Psoas muscle (tissue), 8 donors: ENCODE measurements at regions of chr6 and their contacts with region 1.

Region 1: GRCh38 chr6:156776840-156777576 is at the start of gene ARID1B:
- DNase-seq: peak; percentile 89 to 92
- ATAC-seq: peak; percentile 75 to 81 (median 78)
- H3K4me3 ChIP-seq: peak within 1 kb of the TSS; percentile 84
- H3K27ac ChIP-seq: peak within 1 kb of the TSS; percentile 99
- H3K4me1 ChIP-seq: peaks cover 35% of the 10 kb centered on the region
- H3K27me3 ChIP-seq: no peaks in the 10 kb centered on the region
- CTCF ChIP-seq: no peak
- total RNA-seq, gene ARID1B: 53.1 to 61.1 (median 55.8) TPM

Region 2: DNA sequence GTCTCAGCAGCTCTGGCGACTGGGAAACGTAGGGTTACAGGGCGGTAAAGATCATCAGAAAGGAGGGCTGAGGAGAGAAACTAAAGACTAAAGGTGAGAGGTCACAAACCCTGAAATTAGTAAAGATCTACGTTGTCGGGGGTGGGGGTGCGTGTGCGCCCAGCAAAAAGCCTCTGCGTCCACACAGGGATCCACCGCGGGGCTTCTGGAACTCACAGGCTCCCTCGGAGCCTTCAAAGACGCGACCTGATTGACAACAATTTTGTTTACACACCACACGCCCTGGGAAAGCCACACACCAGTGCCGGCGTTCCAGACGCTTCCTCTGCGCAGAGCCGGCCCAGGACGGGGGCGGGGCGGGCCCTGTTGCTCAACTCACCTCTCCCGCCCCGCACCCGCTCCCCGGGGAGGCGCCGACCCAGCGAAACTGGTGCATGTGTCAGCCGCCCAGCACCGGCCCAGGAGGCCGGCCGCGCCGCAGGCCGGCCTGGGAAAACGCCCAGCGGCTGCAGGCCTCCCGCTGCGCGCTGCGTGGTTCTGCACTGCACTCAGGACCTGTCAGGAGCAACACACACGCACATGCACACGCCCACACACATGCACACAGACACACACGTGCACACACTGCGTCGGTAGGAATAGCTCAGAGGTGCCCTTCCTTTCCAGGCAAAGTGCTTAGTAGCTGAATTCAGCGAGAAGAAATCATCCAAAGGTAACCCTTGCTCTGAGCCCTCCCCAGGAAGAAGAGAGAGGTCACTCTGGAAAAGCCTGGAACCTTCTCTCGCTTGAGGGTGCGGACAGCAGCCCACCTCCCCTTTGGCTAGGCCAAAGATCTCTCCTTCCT is 57.1 kb before region 1 on chr6:
- intact Hi-C with region 1: loop called (anchors 2 to 5 kb)
- DNase-seq: peak; percentile 97 to 98
- ATAC-seq: peak; percentile 93 to 98 (median 94)
- H3K4me3 ChIP-seq: peak overlapping the region; percentile 44
- H3K27ac ChIP-seq: peak overlapping the region; percentile 82
- H3K4me1 ChIP-seq: peaks cover 26% of the 10 kb centered on the region
- H3K27me3 ChIP-seq: no peaks in the 10 kb centered on the region
- CTCF ChIP-seq: no peak

Region 3: GRCh38 chr6:156741287-156742073 is 35.5 kb before region 1 on chr6:
- intact Hi-C with region 1: no loop called
- DNase-seq: no peak
- ATAC-seq: no peak
- H3K4me3 ChIP-seq: no peak overlapping the region
- H3K27ac ChIP-seq: no peak overlapping the region
- H3K4me1 ChIP-seq: no peaks in the 10 kb centered on the region
- H3K27me3 ChIP-seq: no peaks in the 10 kb centered on the region
- CTCF ChIP-seq: no peak

Region 4: DNA sequence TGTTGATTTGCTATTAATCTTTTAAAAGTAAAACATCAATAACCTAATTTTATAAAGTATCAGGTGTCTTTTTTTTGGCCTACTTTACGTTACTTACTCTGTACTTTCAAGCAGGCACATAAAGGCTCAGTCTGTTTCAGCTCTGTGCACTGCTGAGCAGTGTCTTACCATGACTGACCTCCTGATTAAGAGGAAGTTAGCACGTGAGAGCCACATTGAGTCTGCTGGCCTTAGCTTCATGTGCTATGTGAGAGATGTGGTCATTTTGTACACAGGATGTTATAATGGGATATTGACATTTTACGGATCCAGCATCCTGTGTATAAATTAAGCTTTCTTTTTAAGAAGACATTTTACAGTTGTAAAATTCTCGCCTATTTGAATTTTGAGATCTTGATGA is 32.0 kb after region 1 on chr6:
- intact Hi-C with region 1: no loop called
- DNase-seq: no peak
- ATAC-seq: peak; percentile 68 to 87 (median 84)
- H3K4me3 ChIP-seq: no peak overlapping the region
- H3K27ac ChIP-seq: peak overlapping the region; percentile 51
- H3K4me1 ChIP-seq: peaks cover 44% of the 10 kb centered on the region
- H3K27me3 ChIP-seq: no peaks in the 10 kb centered on the region
- CTCF ChIP-seq: no peak

Region 5: GRCh38 chr6:156848533-156848932 is 71.5 kb after region 1 on chr6:
- intact Hi-C with region 1: loop called in 1 of 2 experiments (anchors 1 kb)
- DNase-seq: peak; percentile 48 to 86
- ATAC-seq: peak; percentile 24 to 75 (median 68)
- H3K4me3 ChIP-seq: peak overlapping the region; percentile 43
- H3K27ac ChIP-seq: peak overlapping the region; percentile 82
- H3K4me1 ChIP-seq: peaks cover 96% of the 10 kb centered on the region
- H3K27me3 ChIP-seq: no peaks in the 10 kb centered on the region
- CTCF ChIP-seq: no peak

Region 6: DNA sequence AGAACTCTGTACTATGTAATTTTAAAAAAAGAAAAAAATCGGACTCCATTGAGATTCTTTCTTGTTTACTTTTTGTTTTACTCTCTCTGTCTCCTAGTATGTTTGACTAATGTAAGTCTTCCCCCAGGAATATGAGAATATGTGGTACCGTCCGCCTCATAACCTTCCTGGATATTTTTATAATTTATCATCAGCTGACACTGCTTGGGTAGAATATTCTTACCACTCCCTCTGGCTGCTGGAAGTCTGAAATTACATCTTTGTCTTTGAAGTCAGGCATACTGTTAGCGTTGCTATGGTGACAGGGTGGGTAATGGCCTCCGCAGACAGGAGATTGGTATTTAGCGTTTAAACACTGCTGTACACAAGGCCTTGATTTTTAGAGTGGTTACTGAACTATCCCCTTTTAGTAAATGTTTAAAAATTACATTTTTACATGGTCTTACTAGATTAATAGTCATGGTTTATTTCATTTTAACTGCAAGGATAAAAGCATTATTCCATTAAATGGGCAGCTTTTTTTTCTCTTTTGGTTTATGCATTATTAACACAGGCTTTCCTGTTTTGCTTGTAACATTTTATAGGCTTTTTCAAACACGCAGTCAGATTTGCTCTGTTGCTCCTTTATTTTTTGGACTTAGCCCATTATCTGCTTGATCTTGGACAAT is 176.6 kb after region 1 on chr6:
- intact Hi-C with region 1: loop called in 1 of 2 experiments (anchors 10 kb)
- DNase-seq: no peak
- ATAC-seq: peak; percentile 77 to 83 (median 80)
- H3K4me3 ChIP-seq: peak overlapping the region; percentile 50
- H3K27ac ChIP-seq: peak overlapping the region; percentile 89
- H3K4me1 ChIP-seq: peaks cover 97% of the 10 kb centered on the region
- H3K27me3 ChIP-seq: no peaks in the 10 kb centered on the region
- CTCF ChIP-seq: no peak

Region 7: GRCh38 chr6:157021344-157021992 is 244.5 kb after region 1 on chr6:
- intact Hi-C with region 1: loop called (anchors 2 to 5 kb)
- DNase-seq: peak; percentile 94 to 95
- ATAC-seq: peak; percentile 84 to 90 (median 88)
- H3K4me3 ChIP-seq: peak overlapping the region; percentile 84
- H3K27ac ChIP-seq: peak overlapping the region; percentile 100
- H3K4me1 ChIP-seq: peaks cover 48% of the 10 kb centered on the region
- H3K27me3 ChIP-seq: no peaks in the 10 kb centered on the region
- CTCF ChIP-seq: peak; percentile 53

Region 8: DNA sequence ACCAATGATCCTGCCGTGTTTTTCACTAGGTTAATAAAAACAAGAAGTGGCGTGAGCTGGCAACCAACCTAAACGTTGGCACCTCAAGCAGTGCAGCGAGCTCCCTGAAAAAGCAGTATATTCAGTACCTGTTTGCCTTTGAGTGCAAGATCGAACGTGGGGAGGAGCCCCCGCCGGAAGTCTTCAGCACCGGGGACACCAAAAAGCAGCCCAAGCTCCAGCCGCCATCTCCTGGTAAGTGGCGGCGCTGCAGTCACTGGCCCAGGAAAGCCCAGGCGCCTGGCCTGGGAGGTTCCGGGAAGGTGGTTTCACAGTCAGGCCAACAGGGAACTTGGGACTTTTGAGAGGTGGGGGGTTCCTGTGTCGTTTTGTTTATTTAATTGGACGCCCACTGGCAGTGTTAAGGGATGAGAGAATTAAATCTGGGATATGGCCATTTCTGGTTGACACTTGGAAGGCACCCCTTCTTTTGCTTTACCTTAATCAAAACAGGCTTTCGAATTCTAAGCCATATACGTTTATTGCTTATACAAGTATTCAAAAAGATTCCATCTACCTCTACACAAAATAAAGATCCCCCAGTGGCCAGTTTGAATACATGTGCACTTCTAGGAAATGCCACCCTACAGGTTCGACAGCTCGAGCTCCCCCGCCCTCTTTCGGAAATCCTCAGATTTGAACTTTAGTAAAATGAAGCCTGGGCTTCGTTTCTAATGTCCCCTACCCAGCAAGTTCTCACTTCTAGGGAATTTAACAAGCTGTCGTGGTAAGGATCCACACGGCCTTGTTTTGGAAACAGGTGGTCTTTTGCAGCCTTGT is 407.4 kb after region 1 on chr6:
- intact Hi-C with region 1: loop called in 1 of 2 experiments (anchors 10 kb)
- DNase-seq: peak; percentile 74 to 82
- ATAC-seq: peak; percentile 63 to 77 (median 75)
- H3K4me3 ChIP-seq: no peak overlapping the region
- H3K27ac ChIP-seq: peak overlapping the region; percentile 85
- H3K4me1 ChIP-seq: peaks cover 18% of the 10 kb centered on the region
- H3K27me3 ChIP-seq: no peaks in the 10 kb centered on the region
- CTCF ChIP-seq: peak; percentile 88